ENCODE measurements at regions of chr11 and their contacts with region 1.

Region 1: GRCh38 chr11:123511037-123511870 is 81.2 kb downstream of the GRAMD1B start:
- DNase-seq: peak; percentile 81 to 87 (median 83)
- ATAC-seq: peak; percentile 100
- H3K4me3 ChIP-seq: no peak overlapping the region
- H3K4me1 ChIP-seq: no peaks in the 10 kb centered on the region
- CTCF ChIP-seq: peak; percentile 80

Region 2: DNA sequence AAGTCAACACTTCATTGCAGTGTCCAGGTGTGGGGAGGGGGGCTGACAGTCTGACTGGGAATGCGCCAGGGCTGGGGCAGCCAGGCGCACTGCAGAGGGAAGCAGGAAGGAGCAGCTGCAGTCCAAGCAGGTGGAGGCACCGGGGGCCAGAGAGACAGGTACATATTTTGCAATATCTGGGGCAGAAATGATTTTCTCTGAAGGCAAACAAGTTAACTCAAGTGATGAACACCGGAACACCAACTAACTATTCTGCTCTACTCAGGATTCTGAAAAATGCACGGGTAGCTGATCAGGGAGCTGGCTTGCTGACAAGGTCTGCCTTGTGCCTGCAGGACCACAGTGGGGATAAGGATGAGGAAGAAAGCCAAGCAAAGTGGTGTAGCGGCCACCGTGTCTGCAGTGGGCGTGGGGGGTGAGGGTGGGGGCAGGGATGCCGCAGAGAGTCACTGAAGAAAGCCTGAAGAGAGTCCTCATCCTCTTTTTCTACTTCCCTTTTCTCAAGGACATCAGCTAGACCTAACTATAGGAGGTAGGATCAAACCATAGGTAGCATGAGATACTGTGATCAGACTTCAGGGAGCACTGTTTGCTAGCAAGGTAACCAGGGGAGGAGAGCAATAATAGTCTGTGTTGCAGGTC is 59.8 kb after region 1 on chr11:
- intact Hi-C with region 1: loop called (anchors 2 to 5 kb)
- DNase-seq: no peak
- ATAC-seq: no peak
- H3K4me3 ChIP-seq: no peak overlapping the region
- H3K4me1 ChIP-seq: no peaks in the 10 kb centered on the region
- CTCF ChIP-seq: no peak